AG04450 (cell line): ENCODE measurements at regions of chr10 and their contacts with region 1.

Region 1: DNA sequence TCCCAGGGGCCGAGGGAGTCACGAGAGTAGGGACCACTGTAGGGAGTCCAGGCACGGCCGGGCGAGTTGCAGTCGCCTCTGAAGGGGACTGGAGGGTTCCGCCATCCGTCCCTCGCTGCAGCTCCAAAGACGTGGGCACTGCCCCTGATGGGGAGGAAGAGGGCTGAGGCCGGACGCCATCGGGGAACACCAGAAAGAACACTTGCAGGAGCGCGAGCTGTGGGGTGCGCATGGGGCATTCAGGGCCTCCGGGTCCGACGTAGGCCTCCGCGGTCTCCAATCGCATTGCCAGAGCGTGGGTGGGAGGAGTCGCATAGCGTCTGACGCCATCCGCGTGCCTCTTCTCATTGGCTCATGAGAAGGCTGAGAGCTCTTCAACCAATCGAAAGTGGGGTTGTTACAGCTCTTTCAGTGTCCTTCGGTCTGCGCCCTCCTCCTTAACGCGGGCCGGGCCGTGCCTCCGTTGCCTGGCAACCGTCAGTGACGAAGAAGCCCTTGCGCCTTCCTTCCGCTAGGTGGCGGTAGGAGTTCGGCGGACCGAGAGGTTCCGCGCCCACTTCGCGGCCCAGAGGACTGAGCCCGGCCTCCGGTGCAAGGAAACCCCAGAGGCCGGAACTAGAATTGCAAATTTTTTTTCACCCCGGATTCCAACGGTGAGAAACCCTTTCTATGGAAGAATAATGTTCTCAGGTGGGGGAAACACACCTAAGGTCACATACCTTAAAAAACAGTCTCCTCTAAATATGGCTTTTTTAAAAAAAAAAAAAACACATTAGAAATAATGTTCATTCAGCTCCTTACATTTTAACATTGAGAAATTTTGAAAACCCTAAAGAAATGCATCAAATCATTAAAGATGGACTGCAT is at the start of gene TCTN3:
- DNase-seq: peak; percentile 99
- H3K4me3 ChIP-seq: peak within 1 kb of the TSS; percentile 97
- H3K27ac ChIP-seq: peak within 1 kb of the TSS; percentile 72
- H3K27me3 ChIP-seq: no peaks in the 10 kb centered on the region
- CTCF ChIP-seq: peak; percentile 99
- polyA plus RNA-seq, gene TCTN3: 51.3 and 55.3 TPM in 2 replicates

Region 2: DNA sequence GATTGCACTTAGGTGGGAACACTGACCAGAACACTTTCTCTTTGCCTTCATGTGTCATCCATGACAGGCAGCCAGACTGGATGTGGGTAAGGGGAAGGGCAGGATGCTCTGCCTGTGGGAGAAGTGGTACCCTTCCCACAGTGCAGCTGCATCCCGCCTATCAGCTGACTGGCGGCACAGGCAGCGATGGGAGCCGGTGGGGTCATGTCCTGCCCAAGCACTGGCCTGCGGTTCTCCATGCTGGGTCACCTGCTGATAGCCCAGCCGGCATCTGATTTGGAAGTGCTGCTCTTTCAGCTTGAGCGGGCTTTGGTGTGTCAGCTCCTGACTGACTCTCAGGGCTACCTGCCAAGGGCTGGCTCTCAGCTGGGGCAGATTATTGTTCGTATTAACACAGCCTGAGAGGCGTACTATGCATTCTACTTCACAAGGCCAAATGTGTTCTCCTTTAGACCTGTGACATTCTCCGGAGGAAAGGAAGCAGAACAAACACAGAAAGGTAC is 297.9 kb before region 1 on chr10:
- CTCF ChIA-PET with region 1: no interaction called
- POLR2A ChIA-PET with region 1: no interaction called
- DNase-seq: no peak
- H3K4me3 ChIP-seq: no peak overlapping the region
- H3K27ac ChIP-seq: no peak overlapping the region
- H3K27me3 ChIP-seq: no peaks in the 10 kb centered on the region
- CTCF ChIP-seq: no peak

Region 3: DNA sequence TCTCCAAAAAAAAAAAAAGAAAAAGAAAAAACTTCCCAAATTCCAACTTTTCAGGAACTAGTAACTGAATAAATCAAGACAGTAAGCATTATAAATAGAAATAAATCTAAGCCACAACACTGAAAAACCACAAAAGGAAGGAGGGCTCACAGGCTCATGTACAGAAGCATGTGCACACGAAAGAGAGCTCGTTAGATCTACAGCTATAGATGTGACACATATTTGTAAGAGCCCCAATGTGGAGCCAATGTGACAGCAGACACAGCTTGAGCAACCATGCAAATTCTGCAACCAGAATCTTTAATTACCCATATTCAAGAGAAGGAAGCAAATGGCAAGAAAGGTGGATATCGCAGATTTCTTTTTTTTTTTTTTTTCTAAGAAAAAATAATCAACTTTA is 227.5 kb before region 1 on chr10:
- CTCF ChIA-PET with region 1: no interaction called
- POLR2A ChIA-PET with region 1: no interaction called
- DNase-seq: no peak
- H3K4me3 ChIP-seq: no peak overlapping the region
- H3K27ac ChIP-seq: no peak overlapping the region
- H3K27me3 ChIP-seq: no peaks in the 10 kb centered on the region
- CTCF ChIP-seq: no peak

Region 4: DNA sequence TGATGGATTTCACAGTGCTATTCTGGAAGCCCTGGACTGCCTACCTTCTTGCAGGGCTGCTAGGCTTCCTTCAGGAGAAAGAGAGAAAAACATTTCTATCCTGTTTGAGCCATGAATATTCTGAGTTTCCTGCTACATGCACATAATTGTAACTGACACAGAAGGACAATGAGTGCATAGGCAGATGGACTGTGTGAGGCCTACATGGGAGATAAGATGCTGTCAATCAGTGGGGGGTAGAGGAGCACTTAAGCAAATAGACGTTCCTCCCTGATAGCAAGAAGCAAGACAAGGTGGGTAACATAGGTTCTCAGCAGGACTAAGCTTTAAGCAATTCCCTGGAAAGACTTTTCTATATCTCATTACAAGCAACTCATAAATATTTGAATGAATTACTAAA is 49.0 kb before region 1 on chr10:
- CTCF ChIA-PET with region 1: interaction called, 24 read pairs
- POLR2A ChIA-PET with region 1: no interaction called
- DNase-seq: no peak
- H3K4me3 ChIP-seq: no peak overlapping the region
- H3K27ac ChIP-seq: no peak overlapping the region
- H3K27me3 ChIP-seq: no peaks in the 10 kb centered on the region
- CTCF ChIP-seq: no peak

Region 5: GRCh38 chr10:95675403-95676112 is 18.3 kb before region 1 on chr10:
- CTCF ChIA-PET with region 1: interaction called, 46 read pairs
- POLR2A ChIA-PET with region 1: no interaction called
- DNase-seq: no peak
- H3K4me3 ChIP-seq: no peak overlapping the region
- H3K27ac ChIP-seq: no peak overlapping the region
- H3K27me3 ChIP-seq: no peaks in the 10 kb centered on the region
- CTCF ChIP-seq: no peak

Region 6: DNA sequence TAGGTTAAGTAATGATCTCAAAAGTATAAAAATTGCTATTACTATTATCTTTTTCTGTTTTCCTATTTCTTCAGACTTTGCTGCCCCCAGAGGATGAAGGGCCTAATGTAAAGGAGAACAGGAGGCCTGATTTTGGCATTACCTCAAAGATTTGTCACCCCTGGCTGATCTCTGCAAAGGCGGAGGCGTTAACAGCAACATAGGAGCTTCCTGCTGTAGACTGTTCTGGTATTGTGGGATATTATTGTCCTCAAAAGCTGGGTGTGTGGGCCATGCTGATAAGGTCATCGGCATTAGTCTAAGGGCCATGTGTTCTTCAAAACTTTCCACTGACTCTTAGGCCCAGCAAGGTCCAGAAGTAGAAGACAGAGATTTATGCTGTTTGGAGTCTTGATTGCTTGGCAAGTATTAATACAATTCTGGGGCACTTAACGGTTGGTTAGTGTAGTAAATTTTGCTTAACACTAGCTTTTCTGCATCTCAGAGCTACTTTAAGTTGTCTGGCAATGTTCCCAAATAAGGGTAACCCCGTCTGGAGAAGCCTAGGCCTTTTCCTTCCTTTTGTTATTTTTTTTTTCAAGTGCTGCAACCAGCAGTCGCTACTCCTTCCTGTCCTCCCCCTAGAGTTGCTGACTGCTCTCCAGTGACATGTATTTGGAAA is 48.0 kb after region 1 on chr10:
- CTCF ChIA-PET with region 1: interaction called, 29 read pairs
- POLR2A ChIA-PET with region 1: no interaction called
- DNase-seq: no peak
- H3K4me3 ChIP-seq: no peak overlapping the region
- H3K27ac ChIP-seq: no peak overlapping the region
- H3K27me3 ChIP-seq: no peaks in the 10 kb centered on the region
- CTCF ChIP-seq: no peak

Region 7: GRCh38 chr10:95814011-95814727 is 120.3 kb after region 1 on chr10:
- CTCF ChIA-PET with region 1: interaction called, 99 read pairs
- POLR2A ChIA-PET with region 1: no interaction called
- DNase-seq: peak; percentile 59
- H3K4me3 ChIP-seq: no peak overlapping the region
- H3K27ac ChIP-seq: no peak overlapping the region
- H3K27me3 ChIP-seq: no peaks in the 10 kb centered on the region
- CTCF ChIP-seq: no peak

Region 8: GRCh38 chr10:95880704-95881103 is 186.8 kb after region 1 on chr10:
- CTCF ChIA-PET with region 1: interaction called, 34 read pairs
- POLR2A ChIA-PET with region 1: no interaction called
- DNase-seq: no peak
- H3K4me3 ChIP-seq: no peak overlapping the region
- H3K27ac ChIP-seq: no peak overlapping the region
- H3K27me3 ChIP-seq: no peaks in the 10 kb centered on the region
- CTCF ChIP-seq: no peak

Region 9: DNA sequence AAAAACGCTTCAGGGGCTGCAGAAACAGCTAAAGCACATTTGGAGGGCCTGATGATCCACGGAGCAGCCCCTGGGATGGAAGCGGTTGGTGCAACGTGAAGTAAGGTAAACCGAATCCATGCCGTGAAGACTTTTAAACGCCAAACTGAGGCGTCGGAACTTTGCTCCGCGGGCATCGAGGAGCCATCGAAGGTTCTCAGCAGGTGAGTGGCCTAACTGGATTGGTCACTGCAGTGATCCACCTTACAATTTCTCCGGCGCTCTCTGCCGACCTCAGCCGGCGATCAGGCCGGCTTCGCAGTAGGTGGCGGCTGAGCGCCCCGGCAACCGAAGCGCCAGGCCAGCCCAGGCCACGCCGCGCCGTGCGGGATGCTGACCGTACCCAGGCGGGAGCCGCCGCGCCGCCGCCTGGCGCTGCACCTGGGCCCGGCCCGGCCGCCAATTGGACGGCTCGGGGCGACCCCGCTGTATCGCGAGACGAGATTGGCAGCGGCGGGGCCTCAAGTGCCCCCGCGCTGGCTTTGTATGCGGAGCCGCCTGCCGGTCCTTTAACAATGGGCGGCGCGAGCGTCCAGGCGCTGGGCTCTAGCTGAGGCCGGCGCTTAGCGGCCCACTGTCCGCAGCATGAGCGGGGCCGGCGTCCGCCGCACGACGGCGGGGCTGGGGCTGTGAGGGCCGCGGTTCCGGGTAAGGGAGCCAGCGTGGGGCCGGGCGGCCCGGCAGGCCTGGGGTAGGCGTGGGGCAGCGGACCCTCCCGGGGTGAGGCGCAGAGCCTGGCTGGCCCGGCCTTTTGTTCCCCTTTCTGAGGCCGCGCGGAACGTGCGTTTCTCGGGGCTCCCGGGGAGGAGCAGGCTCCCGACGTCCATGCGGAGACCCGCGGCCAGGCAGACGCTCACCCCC is 349.4 kb after region 1 on chr10 and contains the start of gene CCNJ:
- CTCF ChIA-PET with region 1: interaction called, 11 read pairs
- POLR2A ChIA-PET with region 1: no interaction called
- DNase-seq: peak; percentile 68
- H3K4me3 ChIP-seq: peak within 1 kb of the TSS; percentile 84
- H3K27ac ChIP-seq: peak within 1 kb of the TSS; percentile 87
- H3K27me3 ChIP-seq: no peaks in the 10 kb centered on the region
- CTCF ChIP-seq: no peak
- polyA plus RNA-seq, gene CCNJ: 8.4 and 9.2 TPM in 2 replicates